HepG2 (cell line): ENCODE measurements at regions of chr17 and their contacts with region 1.

Region 1: GRCh38 chr17:38729886-38730525 is at the start of gene CISD3:
- DNase-seq: peak; percentile 81
- ATAC-seq: peak; percentile 69
- H3K4me3 ChIP-seq: peak within 1 kb of the TSS; percentile 67 to 100 (median 95)
- H3K27ac ChIP-seq: peak within 1 kb of the TSS; percentile 97
- H3K4me1 ChIP-seq: peaks cover 54% of the 10 kb centered on the region
- H3K27me3 ChIP-seq: no peaks in the 10 kb centered on the region
- CTCF ChIP-seq: peak; percentile 79
- EP300 ChIP-seq: peak in 1 of 2 experiments; percentile 37; a peak in 2 of 4 replicates
- POLR2A ChIP-seq: peak; percentile 22 to 63; a peak in 3 of 4 replicates
- RAD21 ChIP-seq: peak; percentile 97
- total RNA-seq, gene CISD3: 34.1 and 42.6 TPM in 2 replicates

Region 2: GRCh38 chr17:38674749-38675615 is 55.0 kb before region 1 on chr17 and contains the start of gene EPOP:
- CTCF ChIA-PET with region 1: interaction called, 37 read pairs
- POLR2A ChIA-PET with region 1: interaction called, 19 read pairs
- in situ Hi-C with region 1: loop called (anchors 5 kb)
- intact Hi-C with region 1: loop called (anchors 1 kb)
- DNase-seq: peak; percentile 86
- ATAC-seq: peak; percentile 82
- H3K4me3 ChIP-seq: peak within 1 kb of the TSS; percentile 75 to 94 (median 89)
- H3K27ac ChIP-seq: peak within 1 kb of the TSS; percentile 60
- H3K4me1 ChIP-seq: peaks cover 77% of the 10 kb centered on the region
- H3K27me3 ChIP-seq: peaks cover 2 to 6% of the 10 kb centered on the region in 2 experiments; a peak in 4 of 5 replicates
- CTCF ChIP-seq: 0 out of 2 replicates have a peak, but pooled peaks have one; percentile 8
- EP300 ChIP-seq: 0 out of 4 replicates have a peak, but pooled peaks of 1 of the 2 experiments have one; percentile 5
- POLR2A ChIP-seq: peak; percentile 69 to 88
- RAD21 ChIP-seq: 0 out of 2 replicates have a peak, but pooled peaks have one; percentile 5
- total RNA-seq, gene EPOP: 29.0 and 37.8 TPM in 2 replicates

Region 3: DNA sequence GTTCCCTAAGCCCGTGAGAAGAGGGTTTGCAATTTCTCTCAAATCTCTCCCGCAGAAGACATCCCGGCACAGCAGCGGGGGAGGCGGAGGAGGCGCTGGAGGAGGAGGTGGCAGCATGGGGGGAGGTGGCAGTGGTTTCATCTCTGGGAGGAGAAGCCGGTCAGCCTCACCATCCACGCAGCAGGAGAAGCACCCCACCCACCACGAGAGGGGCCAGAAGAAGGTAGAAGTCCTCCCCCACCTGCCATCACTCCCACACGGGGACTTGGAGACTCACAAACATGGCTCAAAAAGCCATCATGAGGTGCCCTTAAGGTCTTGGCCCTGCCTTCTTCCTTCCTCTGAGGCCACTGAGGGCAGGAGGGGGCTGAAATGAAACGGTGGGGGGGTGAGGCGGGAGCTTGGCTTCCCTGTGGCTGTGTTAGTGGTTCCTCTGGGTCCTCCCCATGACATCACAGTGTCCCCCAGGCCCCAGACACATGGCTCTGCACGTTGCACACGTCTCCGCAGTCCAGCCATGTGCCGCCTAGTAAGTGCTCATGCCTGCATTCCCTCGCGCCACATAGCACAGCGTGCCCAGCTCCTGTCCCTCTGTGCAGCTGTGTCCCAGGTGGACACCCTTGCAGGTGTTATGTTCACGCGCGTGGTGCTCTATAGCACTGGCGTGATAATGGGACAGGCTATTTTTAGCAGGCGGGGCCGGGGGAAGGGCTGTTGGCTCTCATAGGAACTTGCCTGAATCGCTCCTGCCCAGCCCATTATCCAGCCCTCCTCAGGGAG is 18.0 kb before region 1 on chr17:
- CTCF ChIA-PET with region 1: no interaction called
- POLR2A ChIA-PET with region 1: interaction called, 43 read pairs
- in situ Hi-C with region 1: no loop called
- intact Hi-C with region 1: no loop called
- DNase-seq: no peak
- ATAC-seq: no peak
- H3K4me3 ChIP-seq: no peak overlapping the region
- H3K27ac ChIP-seq: no peak overlapping the region
- H3K4me1 ChIP-seq: peaks cover 40% of the 10 kb centered on the region
- H3K27me3 ChIP-seq: no peaks in the 10 kb centered on the region
- CTCF ChIP-seq: no peak
- EP300 ChIP-seq: no peak
- POLR2A ChIP-seq: no peak; a peak in 1 of 4 replicates
- RAD21 ChIP-seq: no peak

Region 4: GRCh38 chr17:38719289-38719942 is 10.6 kb before region 1 on chr17:
- CTCF ChIA-PET with region 1: no interaction called
- POLR2A ChIA-PET with region 1: interaction called, 20 read pairs
- in situ Hi-C with region 1: no loop called
- intact Hi-C with region 1: no loop called
- DNase-seq: no peak
- ATAC-seq: no peak; the same call in 2 of the 3 replicates
- H3K4me3 ChIP-seq: no peak overlapping the region
- H3K27ac ChIP-seq: peak overlapping the region; percentile 5
- H3K4me1 ChIP-seq: peaks cover 30% of the 10 kb centered on the region
- H3K27me3 ChIP-seq: no peaks in the 10 kb centered on the region
- CTCF ChIP-seq: no peak
- EP300 ChIP-seq: no peak
- POLR2A ChIP-seq: peak in 1 of 2 experiments; percentile 2; a peak in 1 of 4 replicates
- RAD21 ChIP-seq: no peak

Region 5: DNA sequence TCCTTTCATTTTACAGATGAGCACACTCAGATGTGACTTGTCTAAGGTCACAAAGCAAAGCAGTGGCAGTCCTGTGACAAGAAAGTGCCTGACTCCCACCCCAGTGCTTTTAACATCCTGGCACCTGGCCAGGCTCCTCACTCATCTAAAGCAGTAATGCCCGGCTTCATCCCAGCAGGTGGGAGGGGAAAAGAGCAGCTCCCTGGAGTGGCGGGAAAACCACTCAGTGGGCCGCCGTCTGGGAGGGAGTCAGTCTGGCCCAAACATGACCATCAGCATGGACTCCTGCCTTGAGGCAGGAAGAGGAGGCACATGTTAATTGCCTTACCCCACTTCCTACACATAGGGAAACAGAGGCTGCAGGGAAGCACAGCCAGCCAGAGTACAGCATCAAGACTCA is 15.5 kb after region 1 on chr17:
- CTCF ChIA-PET with region 1: interaction called, 6 read pairs
- POLR2A ChIA-PET with region 1: interaction called, 39 read pairs
- in situ Hi-C with region 1: no loop called
- intact Hi-C with region 1: loop called (anchors 2 kb)
- DNase-seq: peak; percentile 29
- ATAC-seq: no peak
- H3K4me3 ChIP-seq: peak overlapping the region in 2 of 3 experiments; percentile 21 to 84; a peak in 3 of 6 replicates
- H3K27ac ChIP-seq: peak overlapping the region; percentile 84
- H3K4me1 ChIP-seq: peaks cover 64% of the 10 kb centered on the region
- H3K27me3 ChIP-seq: no peaks in the 10 kb centered on the region
- CTCF ChIP-seq: no peak
- EP300 ChIP-seq: no peak
- POLR2A ChIP-seq: no peak
- RAD21 ChIP-seq: no peak

Region 6: GRCh38 chr17:38752119-38752929 is 22.3 kb after region 1 on chr17 and contains the start of gene PSMB3:
- CTCF ChIA-PET with region 1: interaction called, 6 read pairs
- POLR2A ChIA-PET with region 1: interaction called, 30 read pairs
- in situ Hi-C with region 1: no loop called
- intact Hi-C with region 1: loop called (anchors 2 kb)
- DNase-seq: peak; percentile 100
- ATAC-seq: peak; percentile 86
- H3K4me3 ChIP-seq: peak within 1 kb of the TSS; percentile 82 to 93 (median 84)
- H3K27ac ChIP-seq: peak within 1 kb of the TSS; percentile 81
- H3K4me1 ChIP-seq: peaks cover 30% of the 10 kb centered on the region
- H3K27me3 ChIP-seq: no peaks in the 10 kb centered on the region; a peak in 1 of 5 replicates
- CTCF ChIP-seq: peak; percentile 2; the same call in 1 of the 2 replicates
- EP300 ChIP-seq: 0 out of 4 replicates have a peak, but pooled peaks of 1 of the 2 experiments have one; percentile 15
- POLR2A ChIP-seq: peak; percentile 77 to 82
- RAD21 ChIP-seq: no peak
- total RNA-seq, gene PSMB3: 517 and 688 TPM in 2 replicates